ENCODE measurements at regions of chr16 and their contacts with region 1.

Region 1: GRCh38 chr16:23556881-23557778 is at the starts of genes EARS2 and UBFD1:
- DNase-seq: peak; percentile 95
- H3K4me3 ChIP-seq: peak within 1 kb of the TSS; percentile 53
- H3K27me3 ChIP-seq: no peaks in the 10 kb centered on the region
- CTCF ChIP-seq: peak; percentile 97
- polyA plus RNA-seq, gene EARS2: 27.8 and 28.8 TPM in 2 replicates
- polyA plus RNA-seq, gene UBFD1: 61.4 and 78.9 TPM in 2 replicates

Region 2: DNA sequence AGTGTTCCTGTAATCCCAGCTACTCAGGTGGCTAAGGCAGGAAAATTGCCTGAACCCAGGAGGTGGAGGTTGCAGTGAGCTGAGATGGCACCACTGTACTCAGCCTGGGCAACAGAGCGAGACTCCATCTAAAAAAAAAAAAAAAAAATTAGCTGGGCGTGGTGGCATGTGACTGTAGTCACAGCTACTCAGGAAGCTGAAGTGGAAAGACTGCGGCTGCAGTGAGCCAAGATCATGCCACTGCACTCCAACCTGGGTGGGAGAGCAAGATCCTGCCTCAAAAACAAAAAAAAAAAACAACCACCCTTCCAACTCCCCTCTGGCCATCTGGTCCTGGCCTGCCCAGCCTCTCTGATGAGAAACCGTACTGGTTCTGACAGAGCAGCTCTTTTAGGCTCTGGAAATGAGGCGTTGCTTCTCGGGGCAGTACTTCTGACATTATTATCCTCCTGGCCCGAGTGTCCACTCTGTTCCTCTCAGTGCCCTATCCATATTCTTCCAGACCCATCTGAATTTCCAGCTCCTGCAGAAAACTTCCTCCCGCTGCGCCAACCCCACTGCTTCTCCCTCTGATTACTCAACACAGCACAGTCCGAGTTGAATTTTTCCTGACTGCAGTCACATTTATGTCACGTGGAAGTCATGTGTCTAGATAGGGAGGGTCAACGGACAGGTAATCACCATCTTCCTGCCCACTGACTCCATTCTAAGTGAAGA is 60.1 kb before region 1 on chr16:
- CTCF ChIA-PET with region 1: no interaction called
- POLR2A ChIA-PET with region 1: no interaction called
- DNase-seq: peak; percentile 21
- H3K4me3 ChIP-seq: no peak overlapping the region
- H3K27me3 ChIP-seq: no peaks in the 10 kb centered on the region
- CTCF ChIP-seq: no peak

Region 3: GRCh38 chr16:23538919-23539278 is 18.2 kb before region 1 on chr16:
- CTCF ChIA-PET with region 1: interaction called, 7 read pairs
- POLR2A ChIA-PET with region 1: interaction called, 21 read pairs
- DNase-seq: no peak
- H3K4me3 ChIP-seq: no peak overlapping the region
- H3K27me3 ChIP-seq: no peaks in the 10 kb centered on the region
- CTCF ChIP-seq: no peak

Region 4: GRCh38 chr16:23570992-23571632 is 14.0 kb after region 1 on chr16:
- CTCF ChIA-PET with region 1: interaction called, 10 read pairs
- POLR2A ChIA-PET with region 1: interaction called, 3 read pairs
- DNase-seq: no peak
- H3K4me3 ChIP-seq: no peak overlapping the region
- H3K27me3 ChIP-seq: no peaks in the 10 kb centered on the region
- CTCF ChIP-seq: no peak

Region 5: GRCh38 chr16:23608194-23608593 is 51.1 kb after region 1 on chr16:
- CTCF ChIA-PET with region 1: no interaction called
- POLR2A ChIA-PET with region 1: no interaction called
- DNase-seq: no peak
- H3K4me3 ChIP-seq: no peak overlapping the region
- H3K27me3 ChIP-seq: no peaks in the 10 kb centered on the region
- CTCF ChIP-seq: no peak

Region 6: DNA sequence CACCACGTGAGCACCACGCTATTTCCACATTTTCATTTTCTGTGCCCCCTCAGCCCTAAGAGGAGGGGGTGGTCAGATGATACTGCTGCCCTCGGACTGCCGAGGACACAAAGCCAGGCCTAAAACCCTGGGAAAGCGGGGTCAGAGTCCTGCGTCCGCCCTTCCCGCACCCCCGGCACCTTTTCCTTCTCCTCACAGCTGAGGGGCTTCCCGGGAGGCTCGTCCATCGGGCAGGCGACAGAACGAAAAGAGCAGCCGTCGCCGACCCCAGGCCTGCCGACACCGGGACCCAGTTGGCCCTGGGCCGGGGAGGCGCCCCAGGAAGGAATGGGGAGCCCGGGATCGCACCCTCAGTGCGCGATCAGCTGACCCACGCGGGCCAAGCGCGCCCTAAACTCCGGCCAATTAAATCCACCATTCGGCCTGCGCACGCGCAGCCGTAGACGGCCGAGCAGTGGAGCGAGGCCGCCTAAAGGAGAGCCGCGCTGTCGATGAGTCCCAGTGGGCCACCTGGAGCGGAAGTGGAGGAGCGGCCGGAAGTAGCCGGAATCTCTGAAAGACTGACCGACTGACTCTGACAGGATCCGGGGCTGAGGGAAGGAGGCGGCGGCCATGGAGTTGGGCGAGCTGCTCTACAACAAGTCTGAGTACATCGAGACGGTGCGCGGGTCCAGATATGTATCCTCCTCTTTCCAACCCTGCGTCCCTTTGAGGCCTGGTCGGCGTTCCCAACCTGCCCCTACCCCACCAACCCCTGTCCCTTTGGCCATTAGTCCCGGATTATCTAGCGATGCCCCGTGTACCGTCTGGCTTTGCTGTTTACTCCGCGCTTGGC is 84.0 kb after region 1 on chr16 and contains the starts of genes DCTN5 and PALB2:
- CTCF ChIA-PET with region 1: no interaction called
- POLR2A ChIA-PET with region 1: interaction called, 14 read pairs
- DNase-seq: peak; percentile 66
- H3K4me3 ChIP-seq: peak within 1 kb of the TSS; percentile 99
- H3K27me3 ChIP-seq: no peaks in the 10 kb centered on the region
- CTCF ChIP-seq: no peak
- polyA plus RNA-seq, gene DCTN5: 54.0 and 79.1 TPM in 2 replicates
- polyA plus RNA-seq, gene PALB2: 3.2 and 5.7 TPM in 2 replicates